ENCODE measurements at regions of chr2 and their contacts with region 1.

Region 1: GRCh38 chr2:204691911-204692510 is 146.7 kb downstream of the PARD3B start:
- DNase-seq: peak; percentile 53
- H3K4me3 ChIP-seq: no peak overlapping the region
- H3K27ac ChIP-seq: no peak overlapping the region
- H3K4me1 ChIP-seq: no peaks in the 10 kb centered on the region
- H3K27me3 ChIP-seq: no peaks in the 10 kb centered on the region
- CTCF ChIP-seq: peak; percentile 44 to 72 (median 54)
- POLR2A ChIP-seq: no peak

Region 2: DNA sequence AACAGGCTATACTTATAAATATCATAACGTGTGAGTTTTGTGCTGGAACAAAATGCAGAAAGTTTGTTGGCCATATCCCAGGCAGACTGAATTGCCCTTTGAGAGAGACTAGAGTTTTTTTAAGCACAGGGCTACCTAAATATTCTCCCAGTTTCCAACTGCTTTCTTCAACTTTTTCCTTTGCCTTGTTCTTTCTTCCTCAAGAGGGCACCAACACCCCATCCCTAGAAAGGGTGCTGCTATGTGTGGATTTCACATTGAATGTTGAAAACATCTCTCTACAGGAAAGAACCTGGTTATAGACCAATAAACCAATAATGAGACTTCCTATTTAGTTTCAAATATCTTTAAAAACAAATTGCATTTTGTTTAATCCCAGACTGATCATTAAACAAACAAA is 667.5 kb before region 1 on chr2:
- intact Hi-C with region 1: loop called (anchors 10 kb)
- DNase-seq: peak; percentile 37
- H3K4me3 ChIP-seq: no peak overlapping the region
- H3K27ac ChIP-seq: no peak overlapping the region
- H3K4me1 ChIP-seq: no peaks in the 10 kb centered on the region
- H3K27me3 ChIP-seq: no peaks in the 10 kb centered on the region
- CTCF ChIP-seq: peak in 3 of 4 experiments; percentile 40 to 72 (median 61)
- POLR2A ChIP-seq: no peak

Region 3: GRCh38 chr2:204145263-204145751 is 546.7 kb before region 1 on chr2:
- intact Hi-C with region 1: loop called (anchors 10 kb)
- DNase-seq: peak; percentile 67
- H3K4me3 ChIP-seq: peak overlapping the region; percentile 2 to 28
- H3K27ac ChIP-seq: peak overlapping the region in 1 of 2 donors; percentile 22
- H3K4me1 ChIP-seq: no peaks in the 10 kb centered on the region
- H3K27me3 ChIP-seq: no peaks in the 10 kb centered on the region
- CTCF ChIP-seq: peak; percentile 85 to 90 (median 88)
- POLR2A ChIP-seq: no peak

Region 4: DNA sequence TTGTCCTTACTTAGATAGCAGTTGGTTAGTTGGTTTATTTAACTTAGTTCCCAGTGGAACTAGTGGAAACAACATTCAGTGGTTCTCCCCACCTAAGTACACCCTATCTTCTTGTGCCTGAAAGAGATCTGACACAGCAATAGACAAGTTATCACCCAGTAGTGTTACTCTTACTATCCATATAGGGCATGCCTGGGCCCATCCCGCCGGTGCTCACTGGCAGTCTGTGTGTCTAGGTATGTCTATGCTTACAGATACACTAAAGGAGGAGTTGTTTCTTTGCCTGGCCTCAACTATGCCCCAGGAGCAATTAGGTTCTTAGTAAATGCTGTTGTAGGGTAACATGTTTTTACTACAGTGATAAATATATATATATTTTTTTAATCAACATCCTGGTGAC is 978.3 kb after region 1 on chr2:
- intact Hi-C with region 1: loop called (anchors 5 kb)
- DNase-seq: no peak
- H3K4me3 ChIP-seq: no peak overlapping the region
- H3K27ac ChIP-seq: no peak overlapping the region
- H3K4me1 ChIP-seq: no peaks in the 10 kb centered on the region
- H3K27me3 ChIP-seq: no peaks in the 10 kb centered on the region
- CTCF ChIP-seq: no peak
- POLR2A ChIP-seq: no peak